ENCODE measurements at regions of chr11 and their contacts with region 1.

Region 1: DNA sequence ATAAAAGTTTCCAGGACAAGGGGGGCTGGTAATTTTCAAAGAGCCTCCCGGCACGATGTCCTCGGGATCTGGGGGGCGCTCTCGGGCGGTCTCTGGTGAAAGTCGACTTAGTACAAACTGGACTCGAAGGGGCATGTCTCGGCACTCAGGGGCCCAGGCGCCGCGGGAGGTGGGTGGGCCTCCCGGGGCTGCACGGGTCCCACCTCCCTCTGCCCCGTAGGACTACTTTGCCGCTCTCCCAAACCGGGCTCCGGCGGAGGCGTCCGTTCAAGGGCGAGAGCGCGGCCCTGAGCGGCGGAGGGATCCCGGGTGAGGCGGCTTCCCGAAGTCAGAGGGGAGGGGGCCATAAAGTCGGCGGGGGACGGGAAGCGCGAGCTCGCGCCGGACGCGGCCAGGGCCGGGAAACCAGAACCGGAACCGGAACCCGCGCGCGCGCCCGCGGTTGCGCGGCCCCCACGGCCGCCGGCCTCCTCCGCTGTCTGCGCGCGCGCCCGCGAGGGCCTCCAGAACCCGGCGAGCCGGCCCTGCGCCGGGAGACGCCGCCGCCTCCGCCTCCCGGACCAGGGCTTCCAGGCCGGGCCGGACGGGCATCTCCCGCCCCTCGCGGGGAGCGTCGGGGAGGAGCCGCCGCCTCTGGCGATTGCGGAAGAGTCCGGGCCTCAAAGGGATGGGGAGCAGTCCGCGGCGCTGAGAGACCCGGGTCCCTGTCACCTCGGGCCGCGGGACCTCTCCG is at the start of gene ARHGEF12:
- DNase-seq: peak; percentile 98
- ATAC-seq: peak; percentile 89
- total RNA-seq, gene ARHGEF12: 145 TPM

Region 2: GRCh38 chr11:120424185-120424969 is 88.3 kb after region 1 on chr11:
- intact Hi-C with region 1: loop called (anchors 10 kb)
- DNase-seq: no peak
- ATAC-seq: no peak

Measured in sciatic nerve (tissue), 2 donors.